Prostate gland (tissue), 2 donors: ENCODE measurements at regions of chr1 and their contacts with region 1.

Region 1: DNA sequence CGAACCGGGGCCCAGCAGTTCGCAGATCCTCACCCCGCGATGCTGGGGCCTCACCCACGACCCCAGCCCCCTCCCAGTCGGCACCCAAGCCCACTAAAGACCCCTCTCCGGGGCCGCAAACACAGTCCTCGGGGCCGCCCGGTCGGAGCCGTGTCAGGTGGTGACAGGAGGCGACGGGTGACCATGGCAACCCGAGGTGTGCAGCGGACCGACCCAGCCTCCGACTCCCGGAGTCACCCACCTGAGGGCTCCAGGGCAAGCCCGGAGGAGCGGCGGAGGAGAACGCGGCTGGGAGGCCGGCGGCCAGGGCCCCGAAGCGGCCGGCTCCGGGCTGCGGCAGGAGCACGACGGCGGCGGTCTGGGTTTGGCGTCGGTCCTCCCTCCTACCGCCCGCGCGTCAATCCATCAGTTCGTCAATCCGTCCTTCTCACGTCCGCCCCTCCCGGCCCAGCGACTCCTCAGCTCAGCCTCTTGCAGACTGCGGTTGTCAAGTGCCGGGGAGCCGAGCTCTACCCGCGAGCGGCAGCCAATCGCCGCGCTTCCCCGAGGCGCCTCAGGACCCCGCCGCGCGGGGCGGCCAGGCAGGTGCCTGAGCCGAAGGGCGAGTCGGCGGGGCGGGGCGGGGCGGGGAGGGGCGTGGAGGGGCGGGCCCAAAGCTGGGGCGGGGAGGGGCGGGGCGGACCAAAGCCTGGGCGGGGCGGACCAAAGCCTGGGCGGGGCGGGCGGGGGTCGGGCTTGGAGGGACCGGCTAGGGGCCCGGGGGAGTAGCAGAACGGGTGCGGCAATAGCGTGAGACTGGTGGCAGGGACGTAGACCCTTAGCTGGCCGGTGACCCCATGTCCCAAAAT is at the start of gene WDR47:
- DNase-seq: peak; percentile 94
- H3K4me3 ChIP-seq: peak within 1 kb of the TSS; percentile 83 to 99
- H3K27ac ChIP-seq: peak within 1 kb of the TSS; percentile 73 to 81
- H3K4me1 ChIP-seq: no peaks in the 10 kb centered on the region
- H3K27me3 ChIP-seq: no peaks in the 10 kb centered on the region
- CTCF ChIP-seq: no peak
- POLR2A ChIP-seq: peak; percentile 96
- total RNA-seq, gene WDR47: 6.4 to 25.7 TPM

Region 2: GRCh38 chr1:109090196-109091077 is 48.6 kb after region 1 on chr1 and contains the start of gene TMEM167B:
- intact Hi-C with region 1: loop called (anchors 5 kb)
- DNase-seq: peak; percentile 92
- H3K4me3 ChIP-seq: peak within 1 kb of the TSS; percentile 80 to 82
- H3K27ac ChIP-seq: peak within 1 kb of the TSS; percentile 96 to 99
- H3K4me1 ChIP-seq: peaks cover 3% of the 10 kb centered on the region
- H3K27me3 ChIP-seq: no peaks in the 10 kb centered on the region
- CTCF ChIP-seq: peak in 2 of 4 experiments; percentile 9 to 23
- POLR2A ChIP-seq: peak; percentile 75
- total RNA-seq, gene TMEM167B: 37.0 to 40.7 TPM

Region 3: GRCh38 chr1:109248797-109249642 is 207.2 kb after region 1 on chr1 and contains the start of gene CELSR2:
- intact Hi-C with region 1: no loop called
- DNase-seq: peak; percentile 62
- H3K4me3 ChIP-seq: peak within 1 kb of the TSS; percentile 55 to 62
- H3K27ac ChIP-seq: no peak within 1 kb of the TSS
- H3K4me1 ChIP-seq: no peaks in the 10 kb centered on the region
- H3K27me3 ChIP-seq: no peaks in the 10 kb centered on the region
- CTCF ChIP-seq: no peak
- POLR2A ChIP-seq: peak; percentile 49
- total RNA-seq, gene CELSR2: 18.8 to 118 TPM